Calu3 (cell line): ENCODE measurements at regions of chr7 and their contacts with region 1.

Region 1: DNA sequence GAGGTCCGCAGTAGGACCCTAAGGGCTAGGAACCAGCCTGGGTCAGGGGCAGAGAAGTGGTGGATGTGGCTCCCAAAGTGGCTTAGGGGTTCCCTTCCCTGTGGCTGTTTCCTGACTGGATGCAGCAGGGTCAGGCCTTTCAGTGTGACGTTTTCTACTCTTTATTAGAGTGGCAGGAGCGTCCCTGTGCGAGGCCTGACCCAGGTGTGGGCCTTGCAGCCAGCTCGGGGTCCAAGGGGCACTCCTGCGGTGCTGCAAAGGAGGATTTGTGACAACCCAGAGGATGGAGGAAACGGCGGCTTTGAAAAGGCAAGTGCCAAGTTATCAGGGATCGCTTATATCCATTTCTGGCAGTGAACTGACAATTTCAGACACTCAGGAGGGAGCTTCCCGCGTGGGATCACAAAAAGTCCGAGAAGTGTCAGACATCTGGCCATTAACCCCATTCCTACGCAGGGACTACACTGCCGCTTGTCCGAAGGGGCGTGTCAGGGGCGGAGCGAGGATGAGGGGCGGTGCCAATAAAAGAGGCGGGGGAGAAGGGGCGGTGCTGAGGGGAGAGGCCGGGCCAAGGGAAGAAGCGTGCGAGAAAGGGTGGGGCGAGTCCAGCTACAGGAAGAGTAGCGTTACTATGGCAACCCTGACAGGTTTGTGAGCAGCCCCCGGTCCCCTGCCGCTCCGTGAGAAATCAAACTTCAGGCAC is 98.8 kb upstream of the ZNF722 start:
- DNase-seq: peak; percentile 11
- H3K4me3 Mint-ChIP-seq: peak overlapping the region; percentile 55
- H3K27ac Mint-ChIP-seq: no peak overlapping the region
- H3K4me1 Mint-ChIP-seq: no peaks in the 10 kb centered on the region
- H3K27me3 Mint-ChIP-seq: no peaks in the 10 kb centered on the region
- CTCF ChIP-seq: no peak

Region 2: GRCh38 chr7:63887031-63887430 is 12.8 kb before region 1 on chr7:
- CTCF ChIA-PET with region 1: no interaction called
- intact Hi-C with region 1: no loop called
- DNase-seq: no peak
- H3K4me3 Mint-ChIP-seq: no peak overlapping the region
- H3K27ac Mint-ChIP-seq: no peak overlapping the region
- H3K4me1 Mint-ChIP-seq: no peaks in the 10 kb centered on the region
- H3K27me3 Mint-ChIP-seq: no peaks in the 10 kb centered on the region
- CTCF ChIP-seq: no peak

Region 3: GRCh38 chr7:63953181-63953580 is 53.3 kb after region 1 on chr7:
- CTCF ChIA-PET with region 1: no interaction called
- intact Hi-C with region 1: loop called (anchors 10 kb)
- DNase-seq: no peak
- H3K4me3 Mint-ChIP-seq: no peak overlapping the region
- H3K27ac Mint-ChIP-seq: no peak overlapping the region
- H3K4me1 Mint-ChIP-seq: no peaks in the 10 kb centered on the region
- H3K27me3 Mint-ChIP-seq: no peaks in the 10 kb centered on the region
- CTCF ChIP-seq: no peak